Activated B cell treated with CpG ODN at 0.5 μM for 24 hours (primary cell): ENCODE measurements at regions of chr1 and their contacts with region 1.

Region 1: GRCh38 chr1:21508580-21509350 is 458 bp upstream of the ALPL start:
- DNase-seq: peak; percentile 79
- ATAC-seq: peak; percentile 96
- H3K4me3 Mint-ChIP-seq: peak overlapping the region; percentile 78
- H3K27ac Mint-ChIP-seq: peak overlapping the region; percentile 4
- H3K4me1 Mint-ChIP-seq: peaks cover 17% of the 10 kb centered on the region
- H3K27me3 Mint-ChIP-seq: peaks cover 31% of the 10 kb centered on the region
- CTCF ChIP-seq: no peak

Region 2: GRCh38 chr1:21523297-21523813 is 14.6 kb after region 1 on chr1:
- CTCF ChIA-PET with region 1: interaction called, 15 read pairs
- POLR2A ChIA-PET with region 1: interaction called, 10 read pairs
- intact Hi-C with region 1: no loop called
- DNase-seq: no peak
- ATAC-seq: peak; percentile 11
- H3K4me3 Mint-ChIP-seq: peak overlapping the region; percentile 38
- H3K27ac Mint-ChIP-seq: peak overlapping the region; percentile 86
- H3K4me1 Mint-ChIP-seq: peaks cover 76% of the 10 kb centered on the region
- H3K27me3 Mint-ChIP-seq: no peaks in the 10 kb centered on the region
- CTCF ChIP-seq: no peak

Region 3: GRCh38 chr1:21534674-21535378 is 26.1 kb after region 1 on chr1:
- CTCF ChIA-PET with region 1: interaction called, 50 read pairs
- POLR2A ChIA-PET with region 1: interaction called, 4 read pairs
- intact Hi-C with region 1: loop called (anchors 1 kb)
- DNase-seq: no peak
- ATAC-seq: peak; percentile 74
- H3K4me3 Mint-ChIP-seq: no peak overlapping the region
- H3K27ac Mint-ChIP-seq: no peak overlapping the region
- H3K4me1 Mint-ChIP-seq: peaks cover 5% of the 10 kb centered on the region
- H3K27me3 Mint-ChIP-seq: peaks cover 19% of the 10 kb centered on the region
- CTCF ChIP-seq: no peak

Region 4: DNA sequence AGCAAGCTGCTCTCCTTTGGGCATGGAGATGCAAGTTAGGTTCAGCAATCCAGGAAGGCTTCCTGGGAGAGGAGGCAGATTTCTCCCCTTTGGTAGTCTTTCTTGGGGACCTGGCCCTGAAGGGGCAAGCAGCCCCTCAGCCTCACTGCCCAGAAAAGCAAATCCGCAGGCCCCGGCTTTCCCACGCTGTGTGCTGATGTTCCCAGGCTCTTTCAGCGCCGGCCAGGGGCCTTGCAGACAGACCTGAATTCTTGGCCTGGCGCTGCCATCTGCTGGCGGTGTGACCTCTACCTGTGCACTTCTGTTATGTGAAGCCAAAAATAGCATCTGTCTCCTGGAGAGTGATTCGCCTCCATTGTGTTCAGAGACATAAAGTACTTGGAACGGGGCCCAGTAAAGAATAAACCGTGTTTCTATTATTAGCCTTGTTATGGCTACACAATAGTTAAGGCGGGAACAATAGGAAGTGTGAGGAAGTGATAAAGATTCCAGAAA is 65.3 kb after region 1 on chr1:
- CTCF ChIA-PET with region 1: no interaction called
- POLR2A ChIA-PET with region 1: no interaction called
- intact Hi-C with region 1: loop called (anchors 1 kb)
- DNase-seq: no peak
- ATAC-seq: peak; percentile 52
- H3K4me3 Mint-ChIP-seq: no peak overlapping the region
- H3K27ac Mint-ChIP-seq: no peak overlapping the region
- H3K4me1 Mint-ChIP-seq: no peaks in the 10 kb centered on the region
- H3K27me3 Mint-ChIP-seq: peaks cover 8% of the 10 kb centered on the region
- CTCF ChIP-seq: no peak

Region 5: GRCh38 chr1:21647431-21648351 is 138.9 kb after region 1 on chr1:
- CTCF ChIA-PET with region 1: no interaction called
- POLR2A ChIA-PET with region 1: no interaction called
- intact Hi-C with region 1: no loop called
- DNase-seq: no peak
- ATAC-seq: no peak
- H3K4me3 Mint-ChIP-seq: no peak overlapping the region
- H3K27ac Mint-ChIP-seq: no peak overlapping the region
- H3K4me1 Mint-ChIP-seq: peaks cover 16% of the 10 kb centered on the region
- H3K27me3 Mint-ChIP-seq: peaks cover 43% of the 10 kb centered on the region
- CTCF ChIP-seq: no peak

Region 6: DNA sequence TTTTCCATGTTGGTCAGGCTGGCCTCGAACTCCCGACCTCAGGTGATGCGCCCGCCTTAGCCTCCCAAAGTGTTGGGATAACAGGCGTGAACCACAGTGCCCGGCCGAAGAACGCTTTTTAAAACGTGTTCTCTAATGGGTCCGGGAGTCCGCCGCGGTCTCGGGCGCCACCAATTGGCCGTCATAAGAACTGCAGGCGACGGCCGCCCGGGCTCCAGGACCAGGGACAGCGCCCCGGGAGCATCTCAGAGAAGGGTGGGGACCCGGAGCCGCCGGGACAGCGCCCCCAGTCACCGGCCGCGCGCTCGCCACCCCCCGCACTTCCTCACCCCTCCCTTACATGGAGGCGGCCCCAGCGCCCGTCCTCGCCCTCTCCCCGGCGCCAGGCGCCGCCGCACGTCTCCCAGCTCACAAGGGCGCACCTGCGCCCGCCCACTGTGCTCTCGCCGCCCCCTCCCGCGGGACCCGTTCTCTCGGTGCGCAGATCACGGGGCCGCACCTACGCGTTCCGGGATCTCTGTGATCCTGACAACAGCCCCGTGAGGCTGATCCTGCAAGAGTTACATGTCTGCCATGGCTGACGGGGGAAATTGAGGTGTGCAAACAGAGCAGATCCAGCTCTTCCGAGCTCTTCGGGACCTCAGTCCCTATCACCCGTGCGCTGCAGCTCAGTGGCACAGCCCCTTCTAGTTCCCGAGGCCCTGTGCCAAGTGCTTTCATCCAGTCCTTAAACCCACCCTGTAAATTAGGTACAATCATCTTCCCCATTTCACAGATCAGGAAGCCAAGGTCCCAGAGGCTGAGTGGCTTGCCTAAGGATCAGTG is 150.5 kb after region 1 on chr1:
- CTCF ChIA-PET with region 1: no interaction called
- POLR2A ChIA-PET with region 1: no interaction called
- intact Hi-C with region 1: loop called (anchors 2 kb)
- DNase-seq: peak; percentile 77
- ATAC-seq: peak; percentile 97
- H3K4me3 Mint-ChIP-seq: peak overlapping the region; percentile 32
- H3K27ac Mint-ChIP-seq: no peak overlapping the region
- H3K4me1 Mint-ChIP-seq: peaks cover 11% of the 10 kb centered on the region
- H3K27me3 Mint-ChIP-seq: peaks cover 25% of the 10 kb centered on the region
- CTCF ChIP-seq: no peak

Region 7: GRCh38 chr1:22398656-22399420 is 890.1 kb after region 1 on chr1:
- CTCF ChIA-PET with region 1: no interaction called
- POLR2A ChIA-PET with region 1: no interaction called
- intact Hi-C with region 1: no loop called
- DNase-seq: no peak
- ATAC-seq: no peak
- H3K4me3 Mint-ChIP-seq: no peak overlapping the region
- H3K27ac Mint-ChIP-seq: no peak overlapping the region
- H3K4me1 Mint-ChIP-seq: no peaks in the 10 kb centered on the region
- H3K27me3 Mint-ChIP-seq: peaks cover 27% of the 10 kb centered on the region
- CTCF ChIP-seq: no peak

Region 8: GRCh38 chr1:22416555-22417454 is 908.0 kb after region 1 on chr1:
- CTCF ChIA-PET with region 1: no interaction called
- POLR2A ChIA-PET with region 1: no interaction called
- intact Hi-C with region 1: loop called (anchors 5 kb)
- DNase-seq: peak; percentile 50
- ATAC-seq: peak; percentile 66
- H3K4me3 Mint-ChIP-seq: no peak overlapping the region
- H3K27ac Mint-ChIP-seq: no peak overlapping the region
- H3K4me1 Mint-ChIP-seq: peaks cover 5% of the 10 kb centered on the region
- H3K27me3 Mint-ChIP-seq: peaks cover 36% of the 10 kb centered on the region
- CTCF ChIP-seq: no peak